ENCODE measurements at regions of chr2 and their contacts with region 1.

Region 1: GRCh38 chr2:120564213-120565094 is 171.2 kb upstream of the GLI2 start:
- DNase-seq: no peak
- H3K4me3 ChIP-seq: no peak overlapping the region
- H3K27ac ChIP-seq: no peak overlapping the region
- H3K4me1 ChIP-seq: no peaks in the 10 kb centered on the region
- H3K27me3 ChIP-seq: no peaks in the 10 kb centered on the region
- CTCF ChIP-seq: no peak
- POLR2A ChIP-seq: no peak

Region 2: GRCh38 chr2:119248311-119248710 is 1316.1 kb before region 1 on chr2:
- intact Hi-C with region 1: loop called (anchors 5 kb)
- DNase-seq: no peak
- H3K4me3 ChIP-seq: no peak overlapping the region
- H3K27ac ChIP-seq: no peak overlapping the region
- H3K4me1 ChIP-seq: no peaks in the 10 kb centered on the region
- H3K27me3 ChIP-seq: no peaks in the 10 kb centered on the region
- CTCF ChIP-seq: no peak
- POLR2A ChIP-seq: no peak

Measured in breast epithelium (tissue), 4 donors.